PC-9 (cell line): ENCODE measurements at regions of chr14 and their contacts with region 1.

Region 1: DNA sequence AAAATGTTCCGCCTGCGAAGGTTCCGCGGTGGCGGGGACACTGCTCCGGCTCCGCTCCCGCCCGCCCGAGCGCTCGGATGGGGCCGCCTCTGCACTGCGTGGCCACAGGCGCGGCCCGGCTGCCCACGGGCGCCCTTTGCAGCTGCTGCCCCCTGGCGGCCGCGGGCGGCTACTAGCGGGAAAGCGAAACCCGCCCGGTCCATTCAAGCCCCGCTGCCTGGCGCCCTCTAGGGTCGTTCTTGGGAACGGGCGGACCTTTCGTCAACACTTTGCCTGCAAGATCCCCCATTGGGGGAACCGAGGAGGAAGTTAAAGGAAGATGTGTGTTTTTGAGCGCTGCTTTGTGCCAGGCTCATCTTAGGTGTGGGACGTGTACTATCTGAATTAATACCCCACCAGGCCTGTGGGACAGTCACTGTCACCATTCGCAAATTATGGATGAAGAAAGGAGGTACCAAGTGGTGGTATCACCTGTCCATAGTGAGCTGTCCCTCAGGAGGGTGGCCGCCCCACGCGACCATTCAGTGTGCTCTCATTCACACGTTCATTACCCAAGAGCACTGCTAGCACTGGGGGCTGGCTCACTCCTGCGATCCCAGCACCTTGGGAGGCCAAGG is 19.4 kb downstream of the GPR132 start:
- DNase-seq: peak; percentile 56 to 83
- H3K4me3 ChIP-seq: no peak overlapping the region
- H3K27ac ChIP-seq: no peak overlapping the region
- H3K4me1 ChIP-seq: peaks cover 9% of the 10 kb centered on the region
- H3K27me3 ChIP-seq: no peaks in the 10 kb centered on the region
- CTCF ChIP-seq: peak; percentile 98

Region 2: GRCh38 chr14:104768437-104769323 is 277.1 kb before region 1 on chr14:
- CTCF ChIA-PET with region 1: no interaction called
- POLR2A ChIA-PET with region 1: no interaction called
- intact Hi-C with region 1: loop called (anchors 5 kb)
- DNase-seq: peak; percentile 64 to 82
- H3K4me3 ChIP-seq: no peak overlapping the region
- H3K27ac ChIP-seq: no peak overlapping the region
- H3K4me1 ChIP-seq: peaks cover 3% of the 10 kb centered on the region; the same call in 1 of the 2 replicates
- H3K27me3 ChIP-seq: no peaks in the 10 kb centered on the region
- CTCF ChIP-seq: peak; percentile 81

Region 3: GRCh38 chr14:104895786-104896661 is 149.8 kb before region 1 on chr14:
- CTCF ChIA-PET with region 1: no interaction called
- POLR2A ChIA-PET with region 1: no interaction called
- intact Hi-C with region 1: loop called (anchors 2 kb)
- DNase-seq: no peak
- H3K4me3 ChIP-seq: no peak overlapping the region
- H3K27ac ChIP-seq: no peak overlapping the region
- H3K4me1 ChIP-seq: no peaks in the 10 kb centered on the region
- H3K27me3 ChIP-seq: no peaks in the 10 kb centered on the region
- CTCF ChIP-seq: no peak

Region 4: DNA sequence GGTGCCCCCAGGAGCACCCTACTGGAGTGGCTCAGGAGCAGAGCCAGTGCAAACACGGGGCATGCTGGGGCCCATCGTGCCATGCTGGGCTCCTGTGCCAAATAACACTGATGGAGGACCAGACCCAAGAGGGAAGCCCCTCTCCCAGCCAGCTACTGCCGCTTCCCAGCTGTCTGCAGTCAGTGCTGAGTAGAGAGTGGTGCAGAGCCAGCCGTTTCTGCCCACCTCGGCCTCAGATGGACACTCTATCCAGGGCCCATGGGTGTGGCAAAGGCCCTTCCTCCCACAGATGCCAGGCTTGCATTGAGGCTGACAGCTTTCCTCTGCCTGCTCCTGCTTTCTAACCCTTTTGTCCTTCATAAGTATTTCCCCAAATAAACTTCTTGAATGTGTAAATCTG is 47.0 kb before region 1 on chr14:
- CTCF ChIA-PET with region 1: interaction called, 11 read pairs
- POLR2A ChIA-PET with region 1: no interaction called
- intact Hi-C with region 1: no loop called
- DNase-seq: no peak
- H3K4me3 ChIP-seq: no peak overlapping the region
- H3K27ac ChIP-seq: no peak overlapping the region
- H3K4me1 ChIP-seq: peaks cover 4% of the 10 kb centered on the region
- H3K27me3 ChIP-seq: no peaks in the 10 kb centered on the region
- CTCF ChIP-seq: no peak

Region 5: DNA sequence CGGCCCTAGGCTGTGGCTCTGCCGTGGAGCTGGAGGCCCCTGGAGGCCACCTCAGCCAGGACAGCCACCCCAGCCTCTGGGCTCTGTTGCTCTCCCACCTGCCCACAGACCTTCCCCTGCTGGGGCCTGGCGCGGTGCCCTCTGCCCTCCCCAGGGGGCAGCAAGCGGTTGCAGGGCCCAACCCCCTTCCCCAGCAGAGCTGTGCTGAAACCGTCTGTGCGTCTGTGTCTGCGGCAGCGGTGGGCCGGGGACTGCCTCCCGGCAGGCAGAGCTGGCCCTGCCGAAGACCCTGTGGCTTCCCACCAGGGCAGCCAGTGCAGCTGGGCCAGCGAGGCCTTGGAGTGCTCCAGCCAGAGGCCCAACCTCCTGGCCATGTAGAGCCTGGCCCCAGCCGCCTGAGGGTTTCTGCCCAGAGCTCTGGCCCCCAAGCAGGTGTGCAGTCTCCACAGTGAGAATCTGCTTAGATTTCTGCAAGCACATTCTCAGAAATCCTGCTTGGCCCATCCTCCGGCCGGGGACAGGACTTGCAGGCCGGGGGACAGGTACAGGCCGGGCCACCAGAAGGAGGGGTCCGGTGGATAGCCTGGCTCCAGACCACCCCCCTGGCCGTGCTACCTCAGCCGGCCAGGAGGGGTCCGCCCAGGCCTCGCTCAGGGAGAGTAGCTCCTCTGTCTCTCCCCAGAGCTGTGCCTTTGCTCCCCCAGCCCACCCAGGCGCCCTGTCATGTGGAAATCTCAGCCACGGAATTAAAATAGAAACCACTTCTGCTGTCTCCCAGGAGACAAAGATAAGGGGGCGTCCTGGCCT is 425.2 kb after region 1 on chr14:
- CTCF ChIA-PET with region 1: no interaction called
- POLR2A ChIA-PET with region 1: no interaction called
- intact Hi-C with region 1: no loop called
- DNase-seq: no peak
- H3K4me3 ChIP-seq: no peak overlapping the region
- H3K27ac ChIP-seq: no peak overlapping the region
- H3K4me1 ChIP-seq: peaks cover 44% of the 10 kb centered on the region
- H3K27me3 ChIP-seq: no peaks in the 10 kb centered on the region
- CTCF ChIP-seq: no peak